Activated naive CD4-positive, alpha-beta T cell treated with anti-CD3 and anti-CD28 coated beads for 36 hours (primary cell): ENCODE measurements at regions of chr12 and their contacts with region 1.

Region 1: GRCh38 chr12:110619534-110619953 is 5.6 kb downstream of the TCTN1 start:
- DNase-seq: peak; percentile 74
- H3K4me3 Mint-ChIP-seq: no peak overlapping the region
- H3K27ac Mint-ChIP-seq: peak overlapping the region; percentile 79
- H3K4me1 Mint-ChIP-seq: peaks cover 21% of the 10 kb centered on the region
- H3K27me3 Mint-ChIP-seq: no peaks in the 10 kb centered on the region

Region 2: GRCh38 chr12:110371408-110372055 is 248.0 kb before region 1 on chr12:
- CTCF ChIA-PET with region 1: no interaction called
- intact Hi-C with region 1: no loop called
- DNase-seq: no peak
- H3K4me3 Mint-ChIP-seq: no peak overlapping the region
- H3K27ac Mint-ChIP-seq: no peak overlapping the region
- H3K4me1 Mint-ChIP-seq: no peaks in the 10 kb centered on the region
- H3K27me3 Mint-ChIP-seq: no peaks in the 10 kb centered on the region

Region 3: DNA sequence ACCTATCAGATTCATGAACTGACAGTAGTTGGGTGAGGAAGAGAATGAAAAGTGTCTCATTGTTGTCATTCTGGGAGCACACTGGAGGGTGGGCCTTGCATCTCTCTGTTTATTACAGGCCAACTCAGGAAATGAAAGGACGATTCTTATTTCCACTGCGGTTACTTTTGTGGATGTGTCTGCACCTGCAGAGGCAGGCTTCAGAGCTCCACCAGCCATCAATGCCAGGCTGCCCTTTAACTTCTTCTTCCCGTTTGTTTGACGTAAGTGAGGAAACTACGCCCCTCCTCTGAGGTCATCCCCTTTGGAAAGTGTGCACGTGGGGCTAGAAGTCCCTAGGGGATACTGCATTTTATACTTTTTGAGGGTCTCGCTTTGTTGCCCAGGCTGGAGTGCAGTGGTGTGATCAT is 28.1 kb after region 1 on chr12:
- CTCF ChIA-PET with region 1: interaction called, 4 read pairs
- intact Hi-C with region 1: loop called (anchors 1 kb)
- DNase-seq: peak; percentile 61
- H3K4me3 Mint-ChIP-seq: no peak overlapping the region
- H3K27ac Mint-ChIP-seq: peak overlapping the region; percentile 66
- H3K4me1 Mint-ChIP-seq: peaks cover 32% of the 10 kb centered on the region
- H3K27me3 Mint-ChIP-seq: no peaks in the 10 kb centered on the region

Region 4: DNA sequence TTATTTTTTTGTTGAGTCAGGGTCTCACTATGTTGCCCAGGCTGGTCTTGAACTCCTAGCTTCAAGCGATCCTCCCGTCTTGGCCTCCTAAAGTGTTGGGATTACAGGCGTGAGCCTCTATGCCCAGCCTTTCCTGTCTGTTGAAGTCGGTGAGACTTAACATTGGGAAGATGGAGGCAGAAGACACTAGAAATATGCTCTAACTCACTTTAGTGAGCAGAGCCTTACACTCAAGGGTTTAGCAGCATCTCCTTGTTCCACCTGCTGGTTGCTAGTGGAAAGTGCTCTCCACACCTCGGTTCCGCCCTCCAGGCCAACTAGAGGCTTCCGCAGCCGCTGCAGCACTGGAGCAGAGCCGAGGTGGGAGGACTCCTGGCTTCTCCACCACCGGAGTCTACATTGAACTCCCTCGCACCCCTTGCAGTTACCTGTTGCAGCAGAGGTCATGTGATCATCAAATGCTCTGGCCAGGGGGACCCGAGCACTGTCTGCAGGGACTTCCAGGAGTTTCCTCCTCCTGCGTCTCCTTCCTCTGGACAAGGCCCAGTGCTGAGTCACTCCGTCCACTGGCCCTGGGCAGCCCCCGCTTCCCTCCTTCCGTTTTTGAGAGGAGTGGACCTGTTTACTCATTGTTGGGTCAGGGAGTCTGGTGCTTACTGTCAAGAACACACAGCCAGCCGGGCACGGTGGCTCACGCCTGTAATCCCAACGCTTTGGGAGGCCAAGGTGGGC is 78.8 kb after region 1 on chr12:
- CTCF ChIA-PET with region 1: interaction called, 6 read pairs
- intact Hi-C with region 1: loop called (anchors 1 kb)
- DNase-seq: peak; percentile 90
- H3K4me3 Mint-ChIP-seq: no peak overlapping the region
- H3K27ac Mint-ChIP-seq: peak overlapping the region; percentile 57
- H3K4me1 Mint-ChIP-seq: peaks cover 17% of the 10 kb centered on the region
- H3K27me3 Mint-ChIP-seq: no peaks in the 10 kb centered on the region

Region 5: DNA sequence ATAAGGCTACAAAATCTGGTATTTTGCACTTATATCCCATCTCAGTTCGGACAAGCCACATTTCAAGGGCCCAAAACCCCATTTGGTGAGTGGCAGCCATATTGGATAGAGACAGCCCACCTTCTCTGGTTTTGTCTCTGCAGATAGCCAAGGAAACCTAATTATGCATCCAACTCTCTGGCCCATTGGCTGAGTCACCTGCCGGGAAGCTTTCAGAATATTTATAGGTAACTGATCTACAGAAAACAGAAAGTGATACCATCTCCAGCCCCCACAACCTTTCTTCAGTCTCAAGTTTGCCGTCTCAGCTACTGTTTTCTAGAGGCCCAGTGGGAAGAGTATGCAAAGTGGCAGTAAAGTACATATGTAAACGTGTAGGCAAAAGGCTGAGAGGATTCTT is 156.9 kb after region 1 on chr12:
- CTCF ChIA-PET with region 1: interaction called, 6 read pairs
- intact Hi-C with region 1: loop called (anchors 1 kb)
- DNase-seq: peak; percentile 85
- H3K4me3 Mint-ChIP-seq: peak overlapping the region; percentile 60
- H3K27ac Mint-ChIP-seq: peak overlapping the region; percentile 94
- H3K4me1 Mint-ChIP-seq: peaks cover 77% of the 10 kb centered on the region
- H3K27me3 Mint-ChIP-seq: no peaks in the 10 kb centered on the region

Region 6: DNA sequence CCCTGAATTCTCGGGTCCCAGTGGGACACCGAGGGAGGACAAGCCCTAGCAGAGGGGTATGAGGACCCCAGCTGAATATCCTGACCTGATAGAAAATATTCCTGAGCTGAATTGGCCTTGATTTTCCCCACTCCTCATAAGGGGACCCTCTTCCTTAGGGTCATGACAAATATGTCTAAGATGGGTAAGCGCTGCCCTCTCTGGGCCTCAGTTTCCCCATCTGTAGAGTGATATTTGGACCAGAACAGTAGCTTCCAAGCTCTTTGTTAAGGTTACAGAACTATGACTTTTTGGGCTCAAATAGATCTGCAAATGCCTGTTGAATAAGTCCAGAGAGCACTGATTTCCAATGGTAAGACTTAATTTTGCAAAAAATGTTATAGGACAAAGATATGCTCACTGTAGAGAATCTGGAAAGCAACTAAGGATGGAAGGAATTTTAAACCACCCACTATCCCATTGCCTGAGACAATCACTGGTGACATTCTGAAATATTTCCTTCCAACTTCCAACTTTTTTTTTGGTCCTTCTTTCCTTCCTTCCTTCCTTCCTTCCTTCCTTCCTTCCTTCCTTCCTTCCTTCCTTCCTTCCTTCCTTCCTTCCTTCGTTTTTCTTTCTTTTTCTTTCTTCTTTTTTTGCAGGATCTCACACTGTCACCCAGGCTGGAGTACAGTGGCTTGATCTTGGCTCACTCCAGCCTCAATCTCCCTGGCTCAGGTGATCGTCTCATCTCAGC is 268.9 kb after region 1 on chr12:
- CTCF ChIA-PET with region 1: interaction called, 6 read pairs
- intact Hi-C with region 1: loop called (anchors 1 kb)
- DNase-seq: no peak
- H3K4me3 Mint-ChIP-seq: no peak overlapping the region
- H3K27ac Mint-ChIP-seq: no peak overlapping the region
- H3K4me1 Mint-ChIP-seq: peaks cover 8% of the 10 kb centered on the region
- H3K27me3 Mint-ChIP-seq: no peaks in the 10 kb centered on the region